Activated CD4-positive, alpha-beta T cell treated with anti-CD3 and anti-CD28 coated beads for 36 hours (primary cell): ENCODE measurements at regions of chr2 and their contacts with region 1.

Region 1: GRCh38 chr2:168758970-168759820 is 43.2 kb upstream of the NOSTRIN start:
- DNase-seq: peak; percentile 29
- ATAC-seq: peak; percentile 81
- H3K4me3 Mint-ChIP-seq: no peak overlapping the region
- H3K27ac Mint-ChIP-seq: no peak overlapping the region
- H3K4me1 Mint-ChIP-seq: peaks cover 38% of the 10 kb centered on the region
- H3K27me3 Mint-ChIP-seq: no peaks in the 10 kb centered on the region

Region 2: DNA sequence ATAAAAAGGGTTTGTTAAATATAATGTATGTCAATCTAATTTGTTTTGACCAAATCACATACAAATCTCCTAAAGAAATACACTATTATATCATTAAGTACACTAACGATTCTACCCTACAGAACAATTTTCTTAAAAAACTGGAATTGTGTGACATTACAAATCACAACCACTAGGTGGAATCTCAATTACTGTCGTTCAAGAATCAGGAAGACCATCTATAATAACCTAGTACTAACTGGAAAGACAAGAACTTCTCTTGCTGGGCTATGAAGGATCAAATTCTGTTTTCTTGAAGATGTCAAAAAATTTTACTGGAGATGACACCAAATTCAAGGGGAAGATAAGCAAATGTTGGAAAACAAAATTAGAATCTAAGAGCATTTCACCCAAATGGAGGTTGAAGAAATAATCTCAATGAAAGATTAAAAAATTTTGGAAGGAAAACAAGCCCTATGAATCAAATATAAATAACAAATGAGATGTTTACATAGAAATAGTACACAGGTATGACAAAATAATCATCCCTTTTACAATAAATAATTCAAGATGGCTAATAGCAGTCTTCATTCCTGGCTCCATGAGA is 622.7 kb before region 1 on chr2:
- CTCF ChIA-PET with region 1: no interaction called
- POLR2A ChIA-PET with region 1: no interaction called
- intact Hi-C with region 1: loop called in 1 of 2 experiments (anchors 5 kb)
- DNase-seq: no peak
- ATAC-seq: peak; percentile 26
- H3K4me3 Mint-ChIP-seq: no peak overlapping the region
- H3K27ac Mint-ChIP-seq: no peak overlapping the region
- H3K4me1 Mint-ChIP-seq: peaks cover 20% of the 10 kb centered on the region
- H3K27me3 Mint-ChIP-seq: no peaks in the 10 kb centered on the region

Region 3: GRCh38 chr2:168726375-168726774 is 32.8 kb before region 1 on chr2:
- CTCF ChIA-PET with region 1: no interaction called
- POLR2A ChIA-PET with region 1: no interaction called
- intact Hi-C with region 1: no loop called
- DNase-seq: no peak
- ATAC-seq: no peak
- H3K4me3 Mint-ChIP-seq: no peak overlapping the region
- H3K27ac Mint-ChIP-seq: no peak overlapping the region
- H3K4me1 Mint-ChIP-seq: peaks cover 5% of the 10 kb centered on the region
- H3K27me3 Mint-ChIP-seq: no peaks in the 10 kb centered on the region